Activated CD4-positive, alpha-beta memory T cell treated with anti-CD3 and anti-CD28 coated beads, Interleukin-2, amount 10 ng/mL, durations not matched to agents 7 days and 5 days (primary cell): ENCODE measurements at regions of chr6 and their contacts with region 1.

Region 1: GRCh38 chr6:73653571-73654424 is at the start of gene SLC17A5:
- DNase-seq: peak; percentile 92
- H3K4me3 Mint-ChIP-seq: peak within 1 kb of the TSS; percentile 92
- H3K27ac Mint-ChIP-seq: peak within 1 kb of the TSS; percentile 94
- H3K4me1 Mint-ChIP-seq: peaks cover 40% of the 10 kb centered on the region
- H3K27me3 Mint-ChIP-seq: no peaks in the 10 kb centered on the region
- total RNA-seq, gene SLC17A5: 8.0 to 9.5 TPM

Region 2: GRCh38 chr6:73451223-73452107 is 202.3 kb before region 1 on chr6:
- CTCF ChIA-PET with region 1: interaction called, 5 read pairs
- POLR2A ChIA-PET with region 1: interaction called, 18 read pairs
- DNase-seq: peak; percentile 57
- H3K4me3 Mint-ChIP-seq: peak overlapping the region; percentile 95
- H3K27ac Mint-ChIP-seq: peak overlapping the region; percentile 86
- H3K4me1 Mint-ChIP-seq: peaks cover 50% of the 10 kb centered on the region
- H3K27me3 Mint-ChIP-seq: no peaks in the 10 kb centered on the region

Region 3: DNA sequence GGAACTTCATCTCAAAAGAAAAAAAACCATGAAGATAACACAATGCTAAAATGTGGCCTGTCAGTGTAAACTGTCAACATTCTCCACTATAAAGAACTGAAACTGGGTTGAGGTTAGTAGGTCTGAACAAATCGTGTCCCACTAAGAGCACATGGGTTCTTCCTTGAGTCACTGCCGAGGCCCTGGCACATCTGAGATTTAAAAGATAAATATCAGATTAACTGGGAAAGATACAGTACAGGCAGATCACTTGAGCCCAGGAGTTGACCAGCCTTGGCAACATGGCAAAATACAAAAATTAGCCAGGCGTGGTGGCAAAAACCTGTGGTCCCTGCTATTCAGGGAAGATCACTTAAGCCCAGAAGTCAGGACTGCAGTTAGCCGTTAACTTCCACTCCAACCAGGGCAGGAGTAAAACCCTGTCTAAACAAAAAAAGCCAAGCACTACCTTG is 138.6 kb before region 1 on chr6:
- CTCF ChIA-PET with region 1: interaction called, 40 read pairs
- POLR2A ChIA-PET with region 1: interaction called, 148 read pairs
- DNase-seq: no peak
- H3K4me3 Mint-ChIP-seq: no peak overlapping the region
- H3K27ac Mint-ChIP-seq: peak overlapping the region; percentile 75
- H3K4me1 Mint-ChIP-seq: peaks cover 55% of the 10 kb centered on the region
- H3K27me3 Mint-ChIP-seq: no peaks in the 10 kb centered on the region

Region 4: GRCh38 chr6:73560182-73560732 is 93.5 kb before region 1 on chr6:
- CTCF ChIA-PET with region 1: no interaction called
- POLR2A ChIA-PET with region 1: no interaction called
- DNase-seq: no peak
- H3K4me3 Mint-ChIP-seq: no peak overlapping the region
- H3K27ac Mint-ChIP-seq: no peak overlapping the region
- H3K4me1 Mint-ChIP-seq: peaks cover 17% of the 10 kb centered on the region
- H3K27me3 Mint-ChIP-seq: no peaks in the 10 kb centered on the region

Region 5: GRCh38 chr6:73580247-73581149 is 73.3 kb before region 1 on chr6:
- CTCF ChIA-PET with region 1: interaction called, 5 read pairs
- POLR2A ChIA-PET with region 1: interaction called, 15 read pairs
- DNase-seq: peak; percentile 70
- H3K4me3 Mint-ChIP-seq: peak overlapping the region; percentile 65
- H3K27ac Mint-ChIP-seq: peak overlapping the region; percentile 91
- H3K4me1 Mint-ChIP-seq: peaks cover 31% of the 10 kb centered on the region
- H3K27me3 Mint-ChIP-seq: no peaks in the 10 kb centered on the region

Region 6: GRCh38 chr6:73610444-73611275 is 43.1 kb before region 1 on chr6:
- CTCF ChIA-PET with region 1: interaction called, 12 read pairs
- POLR2A ChIA-PET with region 1: no interaction called
- DNase-seq: no peak
- H3K4me3 Mint-ChIP-seq: no peak overlapping the region
- H3K27ac Mint-ChIP-seq: no peak overlapping the region
- H3K4me1 Mint-ChIP-seq: peaks cover 2% of the 10 kb centered on the region
- H3K27me3 Mint-ChIP-seq: no peaks in the 10 kb centered on the region

Region 7: DNA sequence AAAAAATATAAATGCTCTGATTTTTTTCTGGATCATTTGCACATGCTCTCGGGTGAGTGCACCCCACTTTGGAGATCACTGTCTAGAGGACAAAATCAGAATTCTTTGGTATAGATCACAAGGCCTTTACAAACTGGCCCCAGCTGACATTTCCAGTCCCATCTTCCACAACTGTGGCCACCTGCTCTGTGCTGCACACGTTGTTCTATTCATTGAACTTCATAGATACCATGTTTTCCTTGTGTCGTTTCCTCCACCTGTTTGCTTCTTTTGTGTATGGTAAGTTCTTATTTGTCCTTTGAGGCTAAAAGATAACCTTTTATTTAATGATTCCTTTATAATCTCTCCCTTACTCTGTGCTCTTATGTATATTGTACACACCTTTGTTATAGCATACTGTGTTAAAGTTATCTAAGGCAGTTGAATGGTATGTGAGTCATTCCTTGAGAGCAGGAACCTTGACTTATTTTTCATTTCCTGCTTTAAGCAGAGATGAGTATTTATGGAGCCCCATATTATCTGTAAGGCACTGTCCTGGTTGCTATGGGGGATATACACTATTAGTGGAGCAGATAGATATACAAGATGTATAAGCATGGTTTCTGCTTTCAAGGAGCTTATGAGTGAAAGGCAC is 12.0 kb after region 1 on chr6:
- CTCF ChIA-PET with region 1: interaction called, 7 read pairs
- POLR2A ChIA-PET with region 1: interaction called, 20 read pairs
- DNase-seq: no peak
- H3K4me3 Mint-ChIP-seq: no peak overlapping the region
- H3K27ac Mint-ChIP-seq: no peak overlapping the region
- H3K4me1 Mint-ChIP-seq: peaks cover 11% of the 10 kb centered on the region
- H3K27me3 Mint-ChIP-seq: peaks cover 31% of the 10 kb centered on the region